Heart left ventricle (tissue), 16 donors: ENCODE measurements at regions of chr2 and their contacts with region 1.

Region 1: GRCh38 chr2:219571311-219572236 is at the start of gene OBSL1:
- DNase-seq: peak; percentile 83 to 93 (median 91)
- ATAC-seq: peak; percentile 83 to 91 (median 84)
- H3K4me3 ChIP-seq: peak within 1 kb of the TSS; percentile 50 to 92 (median 68)
- H3K27ac ChIP-seq: peak within 1 kb of the TSS; percentile 71 to 96 (median 90)
- H3K4me1 ChIP-seq: peaks cover 0 to 33% (median 10%) of the 10 kb centered on the region in 12 donors
- H3K27me3 ChIP-seq: peaks cover 0 to 30% (median 0%) of the 10 kb centered on the region in 9 donors
- CTCF ChIP-seq: peak in 1 of 12 donors; percentile 15
- POLR2A ChIP-seq: peak in 1 of 2 donors; percentile 39
- total RNA-seq, gene OBSL1: 149 to 230 (median 178) TPM

Region 2: DNA sequence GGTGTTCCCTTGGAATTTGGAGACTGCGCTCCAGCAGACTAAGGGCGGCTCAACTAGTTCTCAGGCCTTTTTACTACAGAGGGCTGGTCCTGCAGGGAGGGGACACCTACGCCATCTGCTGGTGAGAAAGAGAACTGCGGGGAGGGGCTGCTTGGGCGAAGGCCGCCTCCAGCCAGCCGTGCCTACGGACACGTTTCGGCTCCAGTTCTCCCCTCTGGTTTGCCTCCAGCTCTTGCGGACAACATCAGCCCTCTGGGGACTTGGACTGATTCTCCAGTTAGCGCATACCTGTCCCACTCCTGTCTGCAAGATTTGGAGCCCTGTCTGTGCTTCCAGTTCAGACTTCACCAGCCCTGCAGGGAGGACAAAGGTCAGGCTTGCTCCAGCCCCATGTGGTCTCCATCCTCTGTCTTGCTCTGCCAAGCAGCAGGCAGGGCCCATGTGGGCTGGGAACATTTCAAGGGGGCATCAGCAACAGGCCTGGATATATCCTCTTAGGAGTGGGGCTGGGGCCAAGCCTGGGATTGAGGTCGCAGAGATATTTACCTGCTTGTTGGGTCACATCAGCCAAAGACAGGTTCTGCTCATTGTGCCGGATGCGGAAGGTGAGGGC is 272.7 kb before region 1 on chr2:
- intact Hi-C with region 1: no loop called
- DNase-seq: peak; percentile 82 to 91 (median 85)
- ATAC-seq: peak; percentile 69 to 79 (median 72)
- H3K4me3 ChIP-seq: no peak overlapping the region
- H3K27ac ChIP-seq: no peak overlapping the region
- H3K4me1 ChIP-seq: peaks cover 0 to 19% (median 9%) of the 10 kb centered on the region in 12 donors
- H3K27me3 ChIP-seq: peaks cover 0 to 29% (median 8%) of the 10 kb centered on the region in 9 donors
- CTCF ChIP-seq: peak; percentile 96 to 100 (median 98)
- POLR2A ChIP-seq: no peak

Region 3: GRCh38 chr2:219627103-219628100 is 55.8 kb after region 1 on chr2 and contains the start of gene SLC4A3:
- intact Hi-C with region 1: loop called in 4 of 10 experiments (anchors 1 to 10 kb)
- DNase-seq: peak in 3 of 5 donors; percentile 52 to 79 (median 67)
- ATAC-seq: peak in 2 of 4 donors; percentile 8 to 14
- H3K4me3 ChIP-seq: peak within 1 kb of the TSS; percentile 44 to 71 (median 60)
- H3K27ac ChIP-seq: peak within 1 kb of the TSS; percentile 76 to 100 (median 95)
- H3K4me1 ChIP-seq: peaks cover 0 to 67% (median 6%) of the 10 kb centered on the region in 12 donors
- H3K27me3 ChIP-seq: peaks cover 0 to 12% (median 6%) of the 10 kb centered on the region in 9 donors
- CTCF ChIP-seq: peak in 2 of 12 donors; percentile 17 to 34
- POLR2A ChIP-seq: peak in 1 of 2 donors; percentile 34
- total RNA-seq, gene SLC4A3: 249 to 507 (median 428) TPM

Region 4: GRCh38 chr2:219633276-219634065 is 61.9 kb after region 1 on chr2:
- intact Hi-C with region 1: loop called in 5 of 10 experiments (anchors 1 to 10 kb)
- DNase-seq: peak in 1 of 5 donors; percentile 5
- ATAC-seq: no peak
- H3K4me3 ChIP-seq: peak overlapping the region in 8 of 12 donors; percentile 3 to 51 (median 26)
- H3K27ac ChIP-seq: peak overlapping the region in 11 of 12 donors; percentile 35 to 100 (median 95)
- H3K4me1 ChIP-seq: peaks cover 0 to 77% (median 7%) of the 10 kb centered on the region in 12 donors
- H3K27me3 ChIP-seq: peaks cover 0 to 5% (median 0%) of the 10 kb centered on the region in 9 donors
- CTCF ChIP-seq: no peak
- POLR2A ChIP-seq: no peak